ENCODE measurements at regions of chr12 and their contacts with region 1.

Region 1: DNA sequence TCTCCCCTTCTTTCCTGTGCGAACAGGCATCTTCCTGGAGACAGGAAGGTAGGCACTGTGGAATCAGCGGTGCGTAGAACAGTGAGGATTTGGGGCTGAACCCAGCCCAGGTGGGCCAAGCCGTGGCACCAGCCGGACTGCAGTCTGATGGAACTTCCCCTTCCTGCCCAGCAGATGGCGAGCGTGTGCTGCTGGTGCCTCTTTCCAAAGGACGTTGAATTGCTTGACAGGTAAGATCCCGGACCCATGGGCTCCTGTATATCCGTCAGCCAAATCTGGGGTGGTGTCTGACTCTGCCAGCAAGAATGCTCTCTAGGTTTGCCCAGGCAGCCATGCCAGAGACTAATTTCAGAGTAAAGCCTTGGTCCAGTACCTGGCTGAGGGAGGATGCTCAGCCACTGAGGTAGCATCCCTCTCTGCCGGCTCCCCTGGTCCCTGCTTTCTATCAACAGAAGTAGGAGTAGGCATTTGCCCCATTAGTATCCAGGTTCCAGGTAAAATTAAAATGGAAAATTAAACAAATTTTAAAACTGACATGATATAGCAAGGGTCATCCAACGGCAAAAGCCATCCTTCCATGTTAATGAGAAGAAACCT is 21.1 kb upstream of the KCNA5 start:
- DNase-seq: peak; percentile 46
- H3K4me3 ChIP-seq: no peak overlapping the region
- H3K27ac ChIP-seq: no peak overlapping the region
- H3K4me1 ChIP-seq: no peaks in the 10 kb centered on the region
- H3K27me3 ChIP-seq: peaks cover 2% of the 10 kb centered on the region
- CTCF ChIP-seq: peak; percentile 86 to 91 (median 87)
- POLR2A ChIP-seq: no peak

Region 2: DNA sequence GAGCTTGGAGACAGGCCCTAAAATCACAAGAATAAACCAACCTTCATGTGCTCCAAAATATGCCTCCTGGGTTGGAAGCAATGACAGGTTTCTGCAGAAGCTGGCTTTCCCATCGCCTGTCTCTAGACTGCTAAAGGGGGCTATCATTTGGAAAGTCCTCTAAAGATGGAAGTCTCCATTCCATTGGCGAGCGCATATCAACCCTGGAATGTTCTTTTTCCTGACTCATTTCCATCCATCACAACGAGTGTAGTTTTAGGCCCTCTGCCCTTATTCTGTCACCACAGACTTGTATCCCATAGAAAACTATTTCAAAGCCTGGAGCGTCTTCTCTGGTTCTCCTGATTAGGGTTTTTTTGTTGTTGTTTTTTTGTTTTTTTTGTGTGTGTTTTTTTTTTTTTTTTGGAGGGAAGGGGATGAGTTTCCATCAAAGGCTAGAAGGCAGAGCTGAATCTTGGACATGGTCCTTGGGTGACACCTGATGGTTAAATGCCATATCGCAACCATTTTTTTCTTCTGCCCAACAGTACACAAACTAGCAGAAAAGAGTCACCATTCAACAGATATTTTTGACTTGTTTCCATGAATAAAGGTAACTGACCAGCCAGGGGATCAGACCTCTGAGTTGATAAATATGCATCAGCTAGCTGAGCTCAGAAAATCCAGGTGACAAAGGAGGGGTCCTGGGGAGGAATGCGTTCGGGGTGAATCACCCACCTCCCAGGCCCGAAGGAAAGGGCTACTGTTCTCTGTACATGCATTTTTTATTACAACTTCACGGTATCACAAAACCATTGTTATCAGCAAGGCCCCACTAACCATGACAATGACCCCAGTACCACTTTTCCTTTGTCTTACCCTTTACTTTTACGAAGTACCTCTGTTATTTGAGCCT is 61.6 kb after region 1 on chr12:
- intact Hi-C with region 1: loop called (anchors 1 kb)
- DNase-seq: peak; percentile 49
- H3K4me3 ChIP-seq: no peak overlapping the region
- H3K27ac ChIP-seq: no peak overlapping the region
- H3K4me1 ChIP-seq: no peaks in the 10 kb centered on the region
- H3K27me3 ChIP-seq: no peaks in the 10 kb centered on the region
- CTCF ChIP-seq: peak; percentile 30 to 83 (median 59)
- POLR2A ChIP-seq: no peak